Activated CD8-positive, alpha-beta T cell treated with anti-CD3 and anti-CD28 coated beads for 36 hours (primary cell): ENCODE measurements at regions of chr2 and their contacts with region 1.

Region 1: DNA sequence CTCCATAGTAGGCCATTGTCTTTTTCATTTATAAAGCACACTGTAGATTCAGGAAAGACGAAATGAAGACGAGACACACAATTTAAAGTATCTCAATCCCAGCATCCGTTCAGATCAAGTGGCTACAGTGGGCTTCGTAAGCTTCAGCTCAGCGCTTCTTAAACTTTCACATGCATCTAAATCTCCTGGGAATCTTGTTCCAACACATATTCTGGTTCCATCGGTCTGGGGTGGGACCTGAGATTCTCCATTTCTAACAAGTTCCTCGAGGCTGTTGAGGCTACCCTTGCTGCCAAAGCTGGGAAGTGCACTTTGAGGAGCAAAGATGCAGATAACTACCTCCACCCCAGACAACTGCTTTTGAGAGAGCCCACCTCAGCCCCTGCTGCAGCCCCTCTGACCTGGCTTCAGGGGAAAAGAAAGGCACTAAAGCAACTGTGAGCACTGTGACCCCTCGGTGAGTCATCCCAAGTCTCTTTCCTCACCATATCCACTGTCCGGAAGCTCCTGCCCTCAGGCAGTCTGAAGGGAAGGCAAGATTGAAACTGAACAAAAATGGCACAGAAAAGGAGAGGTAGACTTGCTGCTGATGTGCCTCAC is 201.1 kb upstream of the FBXO11 start:
- DNase-seq: no peak
- ATAC-seq: no peak
- H3K4me3 Mint-ChIP-seq: no peak overlapping the region
- H3K27ac Mint-ChIP-seq: no peak overlapping the region
- H3K4me1 Mint-ChIP-seq: peaks cover 14% of the 10 kb centered on the region
- H3K27me3 Mint-ChIP-seq: no peaks in the 10 kb centered on the region
- CTCF ChIP-seq: no peak

Region 2: GRCh38 chr2:47906157-47907038 is 201.0 kb before region 1 on chr2 and contains the start of gene FBXO11:
- CTCF ChIA-PET with region 1: interaction called, 20 read pairs
- POLR2A ChIA-PET with region 1: interaction called, 4 read pairs
- intact Hi-C with region 1: loop called (anchors 2 kb)
- DNase-seq: peak; percentile 98
- ATAC-seq: peak; percentile 89
- H3K4me3 Mint-ChIP-seq: peak within 1 kb of the TSS; percentile 79
- H3K27ac Mint-ChIP-seq: peak within 1 kb of the TSS; percentile 98
- H3K4me1 Mint-ChIP-seq: peaks cover 27% of the 10 kb centered on the region
- H3K27me3 Mint-ChIP-seq: no peaks in the 10 kb centered on the region
- CTCF ChIP-seq: no peak
- total RNA-seq, gene FBXO11: 47.3 to 48.1 TPM

Region 3: DNA sequence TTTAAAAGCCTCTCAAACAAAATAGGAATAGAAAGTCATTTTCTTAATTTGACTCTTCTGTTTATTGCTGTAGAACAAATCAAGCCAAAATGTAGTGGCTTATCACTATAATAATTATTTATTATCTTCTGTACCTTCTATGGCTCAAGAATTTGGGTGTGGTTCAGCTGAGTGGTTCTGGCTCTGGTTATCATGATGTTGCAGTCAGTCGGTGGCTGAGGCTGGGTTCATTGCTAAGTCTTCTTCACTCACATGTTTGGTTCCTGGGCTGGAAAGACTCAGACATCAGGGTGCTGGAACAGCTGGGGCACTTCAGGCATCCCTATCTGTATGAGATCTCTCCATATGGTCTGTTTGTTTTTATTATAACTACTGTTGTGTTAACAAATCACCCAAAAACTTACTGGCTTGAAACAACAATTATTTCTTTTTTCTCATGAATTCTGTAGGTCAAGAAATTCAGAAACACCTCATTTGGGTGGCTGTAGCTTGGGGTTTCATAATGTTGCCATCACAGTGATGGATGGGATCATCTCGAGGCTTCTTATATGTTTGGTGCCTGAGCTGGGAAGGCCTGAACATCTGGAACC is 41.5 kb after region 1 on chr2:
- CTCF ChIA-PET with region 1: no interaction called
- POLR2A ChIA-PET with region 1: no interaction called
- intact Hi-C with region 1: no loop called
- DNase-seq: no peak
- ATAC-seq: no peak
- H3K4me3 Mint-ChIP-seq: no peak overlapping the region
- H3K27ac Mint-ChIP-seq: no peak overlapping the region
- H3K4me1 Mint-ChIP-seq: peaks cover 21% of the 10 kb centered on the region
- H3K27me3 Mint-ChIP-seq: no peaks in the 10 kb centered on the region
- CTCF ChIP-seq: no peak

Region 4: GRCh38 chr2:48414980-48415835 is 307.8 kb after region 1 on chr2:
- CTCF ChIA-PET with region 1: interaction called, 18 read pairs
- POLR2A ChIA-PET with region 1: no interaction called
- intact Hi-C with region 1: no loop called
- DNase-seq: no peak
- ATAC-seq: no peak
- H3K4me3 Mint-ChIP-seq: no peak overlapping the region
- H3K27ac Mint-ChIP-seq: peak overlapping the region; percentile 51
- H3K4me1 Mint-ChIP-seq: peaks cover 30% of the 10 kb centered on the region
- H3K27me3 Mint-ChIP-seq: no peaks in the 10 kb centered on the region
- CTCF ChIP-seq: no peak

Region 5: GRCh38 chr2:48420512-48421197 is 313.2 kb after region 1 on chr2:
- CTCF ChIA-PET with region 1: interaction called, 18 read pairs
- POLR2A ChIA-PET with region 1: no interaction called
- intact Hi-C with region 1: no loop called
- DNase-seq: peak; percentile 97
- ATAC-seq: peak; percentile 90
- H3K4me3 Mint-ChIP-seq: peak overlapping the region; percentile 26
- H3K27ac Mint-ChIP-seq: peak overlapping the region; percentile 68
- H3K4me1 Mint-ChIP-seq: peaks cover 28% of the 10 kb centered on the region
- H3K27me3 Mint-ChIP-seq: peaks cover 4% of the 10 kb centered on the region
- CTCF ChIP-seq: peak; percentile 95